Astrocyte of the cerebellum (primary cell): ENCODE measurements at regions of chr5 and their contacts with region 1.

Region 1: DNA sequence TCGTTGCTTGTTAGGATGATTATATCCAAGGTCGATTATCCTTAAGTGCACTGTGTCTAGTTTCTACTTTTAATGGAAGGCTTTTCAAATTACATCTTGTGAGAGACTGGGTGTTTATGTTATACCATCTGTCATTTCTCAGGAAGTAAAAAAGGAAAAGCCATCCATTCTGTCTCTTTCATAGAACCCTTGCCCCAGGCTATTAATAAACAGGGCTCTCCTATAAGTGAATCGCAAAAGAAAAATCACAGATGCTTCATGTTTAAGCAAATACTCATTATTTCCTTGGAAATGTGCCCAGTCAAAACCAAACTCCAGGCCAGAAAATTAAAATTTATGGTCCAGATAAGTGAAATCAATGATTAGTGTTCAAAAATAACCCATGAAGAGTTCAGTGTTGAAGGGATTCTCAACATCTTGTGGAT is 58.1 kb downstream of the STARD4 start:
- DNase-seq: no peak
- H3K4me3 ChIP-seq: no peak overlapping the region
- CTCF ChIP-seq: no peak

Region 2: GRCh38 chr5:111486055-111486454 is 31.8 kb after region 1 on chr5:
- in situ Hi-C with region 1: loop called (anchors 5 kb)
- DNase-seq: no peak
- H3K4me3 ChIP-seq: no peak overlapping the region
- CTCF ChIP-seq: no peak